ENCODE measurements at regions of chr18 and their contacts with region 1.

Region 1: DNA sequence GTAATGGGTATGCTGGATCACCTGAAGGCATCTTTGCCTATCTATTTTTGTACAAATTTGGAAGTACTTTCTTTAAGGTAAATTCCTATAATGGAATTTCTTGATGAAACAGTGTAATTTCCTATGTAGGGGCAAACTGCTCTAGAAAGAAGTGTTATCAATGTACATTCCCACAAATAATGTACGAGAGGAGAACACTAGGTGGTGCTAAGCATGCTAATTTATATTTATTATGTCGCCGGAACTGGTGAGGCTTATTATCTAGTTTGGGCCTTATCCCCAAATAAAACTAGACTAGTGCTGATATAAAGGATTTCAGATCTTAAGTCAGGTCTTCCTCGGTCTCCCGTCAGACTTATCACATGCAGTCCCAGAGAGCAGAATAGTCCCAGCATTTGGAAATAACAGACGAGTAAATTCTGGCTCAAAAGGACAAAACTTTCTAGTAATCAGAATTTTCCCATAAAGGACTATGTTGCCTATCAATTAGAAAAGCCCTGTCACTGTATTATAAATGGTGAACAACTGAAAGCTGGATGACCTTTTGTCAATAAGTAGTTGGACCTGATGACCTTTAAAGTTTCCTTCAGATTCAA is 86.9 kb upstream of the RBBP8 start:
- DNase-seq: peak; percentile 22
- H3K4me3 ChIP-seq: no peak overlapping the region
- H3K27ac ChIP-seq: no peak overlapping the region
- H3K4me1 ChIP-seq: no peaks in the 10 kb centered on the region
- H3K27me3 ChIP-seq: peaks cover 23 to 26% of the 10 kb centered on the region in 2 experiments
- CTCF ChIP-seq: peak; percentile 17 to 32
- POLR2A ChIP-seq: no peak

Region 2: DNA sequence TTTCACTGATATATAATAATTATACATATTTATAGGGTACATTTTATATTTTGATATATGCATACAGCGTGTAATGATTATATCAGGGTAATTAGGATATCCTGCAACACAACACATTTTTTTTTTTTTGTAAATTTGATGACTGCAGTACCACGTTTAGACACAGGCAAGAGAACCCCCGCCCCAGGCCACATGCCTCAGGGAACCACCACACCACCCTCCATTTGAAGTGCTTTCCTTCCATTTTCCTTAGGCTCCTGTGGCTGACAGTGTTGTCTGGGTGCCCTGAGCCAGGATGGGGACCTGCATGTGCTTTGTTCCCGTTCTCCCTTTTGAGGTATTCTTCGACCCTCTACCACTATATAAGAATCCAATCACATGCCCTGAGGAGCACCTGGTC is 266.9 kb before region 1 on chr18:
- CTCF ChIA-PET with region 1: no interaction called
- POLR2A ChIA-PET with region 1: no interaction called
- dilution Hi-C with region 1: no loop called
- intact Hi-C with region 1: no loop called
- DNase-seq: no peak
- H3K4me3 ChIP-seq: no peak overlapping the region
- H3K27ac ChIP-seq: no peak overlapping the region
- H3K4me1 ChIP-seq: no peaks in the 10 kb centered on the region
- H3K27me3 ChIP-seq: no peaks in the 10 kb centered on the region
- CTCF ChIP-seq: no peak
- POLR2A ChIP-seq: no peak

Region 3: DNA sequence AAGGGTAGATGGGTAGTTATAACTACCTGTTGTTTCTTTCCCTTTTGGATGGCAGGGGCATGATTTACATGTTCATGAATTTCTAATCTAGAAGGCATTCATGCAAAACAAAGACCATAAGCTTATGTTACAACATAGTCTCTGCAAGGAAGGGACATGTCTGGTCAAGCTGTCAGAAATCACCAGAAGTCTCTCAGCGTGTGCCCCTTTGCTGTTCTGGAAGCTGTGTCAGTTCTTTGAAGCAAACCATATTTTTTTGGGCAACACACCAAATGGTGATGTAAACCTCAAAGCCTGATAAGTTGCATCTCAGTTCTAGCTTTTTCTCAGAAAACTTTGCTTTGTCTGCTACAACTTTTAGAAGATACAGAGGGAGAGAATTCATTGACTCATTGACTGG is 255.0 kb before region 1 on chr18:
- CTCF ChIA-PET with region 1: no interaction called
- POLR2A ChIA-PET with region 1: no interaction called
- dilution Hi-C with region 1: no loop called
- intact Hi-C with region 1: no loop called
- DNase-seq: no peak
- H3K4me3 ChIP-seq: no peak overlapping the region
- H3K27ac ChIP-seq: no peak overlapping the region
- H3K4me1 ChIP-seq: no peaks in the 10 kb centered on the region
- H3K27me3 ChIP-seq: peaks cover 0 to 5% of the 10 kb centered on the region in 2 experiments
- CTCF ChIP-seq: no peak
- POLR2A ChIP-seq: no peak

Region 4: DNA sequence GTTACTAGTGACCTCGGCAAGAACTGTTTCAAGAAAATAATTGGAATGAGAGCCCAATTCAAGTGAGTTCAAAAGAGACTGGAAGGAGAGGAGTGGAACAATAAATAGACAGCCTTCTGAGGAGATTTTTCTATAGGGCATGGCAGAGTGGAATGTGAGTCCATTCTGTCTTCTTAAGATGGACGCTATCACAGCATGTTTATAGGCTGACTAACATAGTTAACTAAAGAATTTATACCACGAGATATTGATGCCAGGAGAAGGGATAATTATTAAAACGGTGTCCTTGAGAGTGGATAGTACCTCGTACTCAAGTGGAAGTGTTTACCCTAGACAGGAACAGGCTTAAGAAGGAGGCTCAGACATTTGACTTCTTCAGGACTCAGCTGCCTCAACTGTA is 56.6 kb before region 1 on chr18:
- CTCF ChIA-PET with region 1: no interaction called
- POLR2A ChIA-PET with region 1: no interaction called
- dilution Hi-C with region 1: no loop called
- intact Hi-C with region 1: no loop called
- DNase-seq: no peak
- H3K4me3 ChIP-seq: no peak overlapping the region
- H3K27ac ChIP-seq: no peak overlapping the region
- H3K4me1 ChIP-seq: no peaks in the 10 kb centered on the region
- H3K27me3 ChIP-seq: peaks cover 33 to 49% of the 10 kb centered on the region in 2 experiments
- CTCF ChIP-seq: no peak
- POLR2A ChIP-seq: no peak

Region 5: DNA sequence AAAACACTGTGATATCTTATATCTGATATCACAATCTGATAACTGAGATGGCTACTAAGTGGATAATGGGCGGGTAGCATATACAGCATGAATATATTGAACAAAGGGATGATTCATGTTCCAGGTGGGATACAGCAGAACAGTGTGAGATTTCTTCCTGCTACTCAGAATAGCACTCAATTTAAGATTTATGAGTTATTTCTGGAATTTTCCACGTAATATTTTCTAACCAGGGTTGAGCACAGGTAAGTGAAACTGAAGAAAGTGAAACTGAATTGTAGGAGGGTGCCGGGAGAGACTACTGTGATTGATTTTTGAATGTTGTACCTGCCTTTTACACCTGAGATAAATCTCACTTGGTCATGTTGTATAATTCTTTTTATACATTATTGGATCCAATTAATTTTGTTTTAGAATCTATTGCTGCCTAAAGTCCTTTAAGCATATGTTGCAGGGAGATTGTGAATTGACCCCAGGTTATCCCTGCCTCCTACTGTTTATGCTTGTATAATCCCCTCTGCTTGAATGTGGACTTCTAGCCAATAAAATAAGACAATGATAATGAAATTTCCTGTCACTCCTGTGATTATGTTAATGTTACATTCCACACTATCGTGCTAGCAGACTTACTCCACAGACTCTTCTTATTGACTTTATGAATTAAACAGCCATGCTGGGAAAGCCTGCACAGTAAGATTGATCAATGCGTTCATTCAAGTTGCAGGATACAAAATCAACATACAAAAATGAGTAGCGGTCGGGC is 19.3 kb after region 1 on chr18:
- CTCF ChIA-PET with region 1: no interaction called
- POLR2A ChIA-PET with region 1: no interaction called
- dilution Hi-C with region 1: no loop called
- intact Hi-C with region 1: no loop called
- DNase-seq: no peak
- H3K4me3 ChIP-seq: no peak overlapping the region
- H3K27ac ChIP-seq: no peak overlapping the region
- H3K4me1 ChIP-seq: no peaks in the 10 kb centered on the region
- H3K27me3 ChIP-seq: peaks cover 12 to 47% of the 10 kb centered on the region in 2 experiments
- CTCF ChIP-seq: no peak
- POLR2A ChIP-seq: no peak

Region 6: GRCh38 chr18:22913857-22914256 is 67.7 kb after region 1 on chr18:
- CTCF ChIA-PET with region 1: no interaction called
- POLR2A ChIA-PET with region 1: no interaction called
- dilution Hi-C with region 1: no loop called
- intact Hi-C with region 1: loop called (anchors 10 kb)
- DNase-seq: no peak
- H3K4me3 ChIP-seq: no peak overlapping the region
- H3K27ac ChIP-seq: no peak overlapping the region
- H3K4me1 ChIP-seq: no peaks in the 10 kb centered on the region
- H3K27me3 ChIP-seq: peaks cover 0 to 2% of the 10 kb centered on the region in 2 experiments
- CTCF ChIP-seq: no peak
- POLR2A ChIP-seq: no peak

Measured in endothelial cell of umbilical vein (primary cell).